Testis (tissue), 5 donors: ENCODE measurements at regions of chr12 and their contacts with region 1.

Region 1: DNA sequence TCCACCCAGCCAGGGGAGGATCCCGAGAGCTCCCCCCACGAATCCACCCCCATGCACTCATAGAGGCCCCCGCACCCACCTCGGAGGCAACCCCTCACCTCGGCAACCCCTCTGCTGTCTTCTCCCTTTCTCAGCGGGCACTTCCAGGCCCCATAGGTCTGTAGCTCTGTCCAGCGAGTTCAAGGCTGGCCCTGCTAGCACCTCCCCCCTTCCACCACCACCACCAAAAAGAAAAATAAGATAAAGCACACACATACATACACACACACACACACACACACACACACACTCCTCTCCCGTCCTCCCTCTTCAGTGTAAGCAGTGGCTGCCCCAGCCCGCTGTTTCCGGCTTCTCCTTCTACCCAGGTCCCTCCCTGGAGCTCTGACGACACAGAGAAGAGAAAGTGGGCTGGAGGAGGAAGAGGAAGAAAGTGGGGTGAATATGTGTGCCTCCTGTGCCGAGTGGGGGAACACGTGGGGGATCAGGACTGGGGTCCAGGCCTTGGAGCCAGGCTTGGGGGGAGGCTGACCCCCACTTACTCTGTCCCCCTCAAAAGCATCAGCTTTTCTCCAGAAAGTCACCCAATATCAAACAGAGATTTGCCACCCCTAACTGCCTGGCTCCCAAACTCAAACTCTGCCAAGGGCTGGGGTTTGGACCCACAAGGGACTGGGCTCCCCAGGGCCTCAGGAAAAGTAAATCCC is at the start of gene STAT6:
- DNase-seq: peak; percentile 86
- H3K4me3 ChIP-seq: peak within 1 kb of the TSS; percentile 67 to 71
- H3K27ac ChIP-seq: peak within 1 kb of the TSS; percentile 96 to 99
- H3K4me1 ChIP-seq: peaks cover 12% of the 10 kb centered on the region
- H3K27me3 ChIP-seq: no peaks in the 10 kb centered on the region
- CTCF ChIP-seq: peak in 1 of 3 experiments; percentile 54
- POLR2A ChIP-seq: no peak
- total RNA-seq, gene STAT6: 66.2 to 81.5 TPM

Region 2: GRCh38 chr12:56616925-56617324 is 494.3 kb before region 1 on chr12:
- intact Hi-C with region 1: no loop called
- DNase-seq: no peak
- H3K4me3 ChIP-seq: no peak overlapping the region
- H3K27ac ChIP-seq: no peak overlapping the region
- H3K4me1 ChIP-seq: peaks cover 10% of the 10 kb centered on the region
- H3K27me3 ChIP-seq: no peaks in the 10 kb centered on the region
- CTCF ChIP-seq: no peak
- POLR2A ChIP-seq: no peak

Region 3: DNA sequence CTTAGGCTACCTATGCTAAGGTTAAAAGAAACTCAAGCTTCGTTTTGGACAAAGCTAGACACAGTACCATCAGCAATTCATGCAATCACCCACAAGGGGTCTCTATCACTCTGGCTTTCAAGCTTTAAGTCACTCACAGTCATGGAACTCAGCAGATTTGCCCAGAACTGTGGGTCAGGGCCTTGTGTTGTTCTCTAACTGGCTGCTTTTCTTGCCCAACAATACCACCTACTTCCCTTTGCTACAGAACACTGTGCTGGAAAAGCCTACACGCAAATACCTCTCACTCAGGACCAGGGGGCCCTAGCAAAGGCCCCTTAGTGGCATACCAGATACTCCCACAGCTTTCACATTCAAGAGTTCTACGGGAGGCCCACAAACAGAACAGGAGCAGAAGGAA is 41.7 kb before region 1 on chr12:
- intact Hi-C with region 1: loop called (anchors 5 kb)
- DNase-seq: peak; percentile 80
- H3K4me3 ChIP-seq: no peak overlapping the region
- H3K27ac ChIP-seq: peak overlapping the region; percentile 40 to 50
- H3K4me1 ChIP-seq: peaks cover 4% of the 10 kb centered on the region
- H3K27me3 ChIP-seq: no peaks in the 10 kb centered on the region
- CTCF ChIP-seq: peak; percentile 72 to 83 (median 81)
- POLR2A ChIP-seq: no peak